AG04450 (cell line): ENCODE measurements at regions of chr17 and their contacts with region 1.

Region 1: GRCh38 chr17:49425004-49425286 is 10.3 kb upstream of the PHB1 start:
- DNase-seq: no peak
- H3K4me3 ChIP-seq: no peak overlapping the region
- H3K27ac ChIP-seq: no peak overlapping the region
- H3K27me3 ChIP-seq: peaks cover 3% of the 10 kb centered on the region
- CTCF ChIP-seq: no peak

Region 2: GRCh38 chr17:49434821-49435670 is 10.1 kb after region 1 on chr17:
- CTCF ChIA-PET with region 1: interaction called, 15 read pairs
- POLR2A ChIA-PET with region 1: no interaction called
- DNase-seq: no peak
- H3K4me3 ChIP-seq: no peak overlapping the region
- H3K27ac ChIP-seq: no peak overlapping the region
- H3K27me3 ChIP-seq: peaks cover 41% of the 10 kb centered on the region
- CTCF ChIP-seq: peak; percentile 70